ENCODE measurements at regions of chr17 and their contacts with region 1.

Region 1: DNA sequence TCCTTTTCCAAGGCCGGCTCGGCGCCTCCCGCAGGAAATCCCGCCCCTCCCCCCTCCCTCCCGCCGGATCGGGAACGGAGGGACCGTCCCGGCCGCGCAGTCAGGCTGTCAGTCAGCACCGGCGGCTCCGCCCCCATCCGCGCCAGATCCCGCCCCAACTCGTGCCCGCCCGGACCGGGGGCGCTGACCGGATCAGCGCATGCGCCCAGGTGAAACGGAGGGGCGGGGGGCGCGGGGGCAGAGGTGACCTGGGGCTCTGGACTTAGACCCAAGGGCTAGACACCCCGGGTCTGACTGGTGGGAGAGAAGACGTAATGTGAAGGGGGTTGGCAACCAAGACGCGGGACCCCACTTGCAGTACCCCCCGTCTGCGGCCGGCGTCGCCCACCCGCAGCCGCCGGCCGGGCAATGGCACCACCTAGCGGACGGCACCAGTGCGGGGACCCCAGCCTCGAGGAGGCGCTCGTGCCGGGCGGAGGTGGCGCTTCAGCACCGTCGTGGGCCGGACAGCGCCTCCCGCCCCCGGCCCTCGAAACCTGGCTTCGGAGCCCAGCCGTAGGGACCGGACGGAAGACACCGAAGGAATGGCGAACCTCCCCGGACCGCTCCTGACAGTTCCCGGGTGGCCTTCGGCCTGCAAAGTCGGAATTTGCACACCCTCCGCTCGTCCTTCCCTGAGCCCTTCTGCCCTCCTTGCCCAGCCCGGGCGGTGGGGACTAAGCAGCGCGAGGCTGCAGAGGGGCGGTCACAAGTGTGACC is at the start of gene CASKIN2:
- DNase-seq: peak; percentile 93
- ATAC-seq: peak; percentile 61
- H3K4me3 Mint-ChIP-seq: peak within 1 kb of the TSS; percentile 68
- H3K27ac Mint-ChIP-seq: no peak within 1 kb of the TSS
- H3K4me1 Mint-ChIP-seq: peaks cover 22% of the 10 kb centered on the region
- H3K27me3 Mint-ChIP-seq: peaks cover 3% of the 10 kb centered on the region
- total RNA-seq, gene CASKIN2: 2.9 to 3.0 TPM

Region 2: DNA sequence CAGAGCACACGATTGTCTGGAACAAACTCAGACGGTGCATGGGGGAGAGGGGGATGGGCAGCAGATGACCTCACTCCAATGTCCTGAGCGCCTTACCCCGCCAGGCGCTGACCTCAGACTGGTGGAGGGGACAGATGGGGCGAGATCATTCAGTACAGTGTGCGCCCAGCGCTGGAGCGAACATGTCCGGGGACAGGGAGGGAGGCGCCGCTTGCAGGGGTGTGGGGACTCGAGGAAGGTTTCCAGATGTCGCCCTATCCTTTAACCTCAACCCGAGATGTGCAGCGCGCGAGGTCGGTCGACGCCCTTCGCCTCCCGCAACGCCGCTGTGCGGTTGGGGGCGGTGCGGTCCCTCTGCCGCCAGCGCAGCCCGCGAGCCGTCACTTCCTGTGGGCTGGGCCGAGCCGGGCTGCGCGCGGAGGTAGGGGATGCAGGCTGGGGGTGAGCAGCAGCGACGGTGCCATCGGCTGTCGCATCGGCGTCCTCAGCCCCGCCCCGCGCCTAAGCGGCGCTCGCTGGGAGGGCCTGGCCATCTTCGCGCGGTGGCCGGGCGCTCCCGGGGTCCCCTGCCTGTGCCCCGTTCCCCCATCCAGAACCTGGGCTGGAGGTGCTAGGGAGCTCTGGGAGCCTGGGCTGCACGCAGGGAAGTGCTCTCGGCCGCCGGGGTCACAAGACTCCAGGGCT is 533.6 kb before region 1 on chr17:
- CTCF ChIA-PET with region 1: no interaction called
- POLR2A ChIA-PET with region 1: no interaction called
- intact Hi-C with region 1: loop called in 1 of 2 experiments (anchors 5 kb)
- DNase-seq: peak; percentile 90
- ATAC-seq: peak; percentile 95
- H3K4me3 Mint-ChIP-seq: peak overlapping the region; percentile 77
- H3K27ac Mint-ChIP-seq: peak overlapping the region; percentile 79
- H3K4me1 Mint-ChIP-seq: peaks cover 18% of the 10 kb centered on the region
- H3K27me3 Mint-ChIP-seq: peaks cover 5% of the 10 kb centered on the region

Region 3: DNA sequence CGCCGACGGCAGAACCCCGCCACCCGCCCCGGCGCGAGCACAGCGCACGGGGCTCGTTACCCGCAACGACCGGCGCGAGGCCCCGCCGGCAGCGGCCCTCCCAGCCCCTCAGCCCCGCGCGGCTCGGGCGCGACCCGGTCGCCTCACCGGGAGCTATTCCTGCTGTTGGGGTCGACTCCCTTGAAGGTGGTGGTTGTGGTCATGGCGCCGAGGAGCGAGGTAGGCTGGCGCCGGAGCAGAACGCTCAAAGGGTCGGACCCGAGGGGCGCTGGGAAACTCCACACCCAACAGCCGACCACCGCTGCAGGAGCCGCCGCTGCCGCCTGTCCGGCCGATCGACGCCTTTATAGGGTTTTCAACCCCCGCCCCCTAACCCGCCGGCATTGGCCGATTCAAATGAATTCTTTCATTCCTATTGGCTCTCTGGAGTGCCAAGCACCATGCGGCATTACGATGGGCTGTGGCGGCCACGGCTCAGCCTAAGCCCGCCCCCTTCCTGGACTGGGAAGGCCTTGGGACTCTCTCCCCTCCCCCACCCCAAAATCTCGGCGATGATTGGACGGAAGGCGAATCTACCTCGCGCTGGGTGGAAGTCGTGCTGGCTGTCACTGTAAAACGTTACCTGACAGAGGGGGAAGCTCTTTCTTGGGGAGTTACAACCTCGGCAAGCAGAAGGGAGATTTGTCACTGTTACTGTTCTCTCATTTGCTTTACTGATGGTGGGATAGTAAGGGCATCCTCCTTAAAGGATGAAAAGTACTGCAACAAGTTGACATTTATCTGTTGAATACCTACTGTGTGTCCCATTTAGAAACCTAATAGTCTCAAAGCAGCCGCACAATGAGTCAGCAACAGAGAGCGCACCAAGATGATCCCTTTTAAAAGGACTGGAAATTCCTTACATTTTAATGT is 361.2 kb before region 1 on chr17 and contains the start of gene JPT1:
- CTCF ChIA-PET with region 1: no interaction called
- POLR2A ChIA-PET with region 1: no interaction called
- intact Hi-C with region 1: loop called in 1 of 2 experiments (anchors 1 kb)
- DNase-seq: peak; percentile 99
- ATAC-seq: peak; percentile 98
- H3K4me3 Mint-ChIP-seq: peak within 1 kb of the TSS; percentile 96
- H3K27ac Mint-ChIP-seq: peak within 1 kb of the TSS; percentile 89
- H3K4me1 Mint-ChIP-seq: peaks cover 36% of the 10 kb centered on the region
- H3K27me3 Mint-ChIP-seq: no peaks in the 10 kb centered on the region
- total RNA-seq, gene JPT1: 234 to 238 TPM

Region 4: DNA sequence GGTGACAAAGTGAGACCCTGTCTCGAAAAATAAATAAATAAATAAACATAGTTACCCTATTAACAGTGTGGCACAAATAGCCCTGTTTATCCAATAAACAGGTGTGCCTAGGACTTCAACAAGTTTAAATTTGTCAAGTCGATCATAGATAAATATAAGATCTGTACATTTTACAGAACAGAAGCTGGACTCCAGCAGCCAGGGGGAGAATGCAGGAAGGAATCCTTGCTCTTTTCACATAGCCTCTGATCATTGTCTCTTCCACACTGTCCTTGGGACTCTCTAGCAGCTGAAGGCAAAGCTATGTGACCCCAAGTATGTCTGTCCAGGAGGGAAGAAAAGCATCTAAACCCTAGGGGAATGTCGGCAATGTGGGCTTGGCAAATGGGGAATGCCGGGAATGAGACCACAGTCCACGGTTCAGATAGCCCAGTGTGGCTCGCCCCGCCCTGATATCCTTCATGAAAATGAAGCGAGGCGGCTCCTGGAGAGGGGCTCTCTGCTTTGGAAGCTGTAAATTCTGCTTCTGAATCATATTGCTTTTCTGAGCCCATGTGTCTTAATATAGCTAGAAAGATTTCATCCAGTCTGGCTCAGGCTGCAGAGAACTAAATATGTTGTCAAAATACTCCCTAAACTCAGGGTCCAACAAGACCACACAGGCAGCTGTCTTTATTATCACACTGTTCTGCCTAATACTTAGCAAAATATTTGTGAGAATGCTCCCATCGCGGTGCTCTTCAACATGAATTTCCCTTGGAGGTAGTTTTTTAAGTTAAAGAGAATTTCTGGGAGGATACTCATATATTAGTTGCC is 85.3 kb before region 1 on chr17:
- CTCF ChIA-PET with region 1: interaction called, 4 read pairs
- POLR2A ChIA-PET with region 1: no interaction called
- intact Hi-C with region 1: loop called (anchors 1 kb)
- DNase-seq: no peak
- ATAC-seq: no peak
- H3K4me3 Mint-ChIP-seq: no peak overlapping the region
- H3K27ac Mint-ChIP-seq: no peak overlapping the region
- H3K4me1 Mint-ChIP-seq: peaks cover 16% of the 10 kb centered on the region
- H3K27me3 Mint-ChIP-seq: peaks cover 5% of the 10 kb centered on the region

Region 5: GRCh38 chr17:75535119-75535537 is 19.5 kb after region 1 on chr17:
- CTCF ChIA-PET with region 1: interaction called, 13 read pairs
- POLR2A ChIA-PET with region 1: no interaction called
- intact Hi-C with region 1: no loop called
- DNase-seq: peak; percentile 82
- ATAC-seq: peak; percentile 99
- H3K4me3 Mint-ChIP-seq: peak overlapping the region; percentile 44
- H3K27ac Mint-ChIP-seq: peak overlapping the region; percentile 88
- H3K4me1 Mint-ChIP-seq: peaks cover 18% of the 10 kb centered on the region
- H3K27me3 Mint-ChIP-seq: no peaks in the 10 kb centered on the region

Region 6: DNA sequence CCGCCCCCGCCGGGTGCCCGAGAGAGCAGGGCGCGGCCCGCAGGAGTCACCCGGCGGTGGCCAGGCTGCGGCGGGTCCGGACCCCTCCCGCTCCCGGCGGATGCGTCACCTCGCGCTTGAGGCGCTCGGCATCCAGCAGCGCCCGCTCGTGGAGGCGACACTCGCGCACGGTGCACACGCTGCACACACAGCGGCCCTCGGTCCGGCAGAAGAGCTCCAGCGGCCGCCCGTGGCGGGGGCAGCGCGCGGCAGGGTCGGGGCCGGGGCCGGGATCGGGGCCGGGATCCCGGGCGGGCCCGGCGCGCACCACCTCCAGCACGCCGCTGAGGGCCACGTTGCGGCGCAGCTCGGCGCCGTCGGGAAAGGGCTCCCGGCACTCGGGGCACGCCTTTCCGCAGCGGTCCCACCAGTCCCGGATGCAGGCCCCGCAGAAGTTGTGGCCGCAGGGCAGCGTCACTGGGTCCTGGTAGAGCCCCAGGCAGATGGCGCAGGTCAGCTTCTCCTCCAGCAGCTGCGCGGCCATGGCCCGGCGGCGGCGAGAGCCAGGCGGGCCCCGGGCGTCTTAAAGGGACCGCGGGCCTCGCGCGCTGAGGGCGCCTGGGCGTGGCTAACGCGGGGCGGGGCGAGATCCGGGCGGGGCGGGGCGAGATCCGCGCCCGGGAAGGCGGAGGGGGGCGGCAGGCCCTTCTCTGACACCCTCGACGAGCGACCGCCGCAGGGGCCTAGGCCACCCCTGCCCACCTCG is 380.9 kb after region 1 on chr17 and contains the start of gene TRIM65:
- CTCF ChIA-PET with region 1: interaction called, 3 read pairs
- POLR2A ChIA-PET with region 1: no interaction called
- intact Hi-C with region 1: loop called in 1 of 2 experiments (anchors 1 kb)
- DNase-seq: peak; percentile 86
- ATAC-seq: peak; percentile 85
- H3K4me3 Mint-ChIP-seq: peak within 1 kb of the TSS; percentile 84
- H3K27ac Mint-ChIP-seq: peak within 1 kb of the TSS; percentile 72
- H3K4me1 Mint-ChIP-seq: peaks cover 19% of the 10 kb centered on the region
- H3K27me3 Mint-ChIP-seq: no peaks in the 10 kb centered on the region
- total RNA-seq, gene TRIM65: 28.9 to 31.9 TPM